Heart right ventricle (tissue), 16 donors: ENCODE measurements at regions of chr11 and their contacts with region 1.

Region 1: DNA sequence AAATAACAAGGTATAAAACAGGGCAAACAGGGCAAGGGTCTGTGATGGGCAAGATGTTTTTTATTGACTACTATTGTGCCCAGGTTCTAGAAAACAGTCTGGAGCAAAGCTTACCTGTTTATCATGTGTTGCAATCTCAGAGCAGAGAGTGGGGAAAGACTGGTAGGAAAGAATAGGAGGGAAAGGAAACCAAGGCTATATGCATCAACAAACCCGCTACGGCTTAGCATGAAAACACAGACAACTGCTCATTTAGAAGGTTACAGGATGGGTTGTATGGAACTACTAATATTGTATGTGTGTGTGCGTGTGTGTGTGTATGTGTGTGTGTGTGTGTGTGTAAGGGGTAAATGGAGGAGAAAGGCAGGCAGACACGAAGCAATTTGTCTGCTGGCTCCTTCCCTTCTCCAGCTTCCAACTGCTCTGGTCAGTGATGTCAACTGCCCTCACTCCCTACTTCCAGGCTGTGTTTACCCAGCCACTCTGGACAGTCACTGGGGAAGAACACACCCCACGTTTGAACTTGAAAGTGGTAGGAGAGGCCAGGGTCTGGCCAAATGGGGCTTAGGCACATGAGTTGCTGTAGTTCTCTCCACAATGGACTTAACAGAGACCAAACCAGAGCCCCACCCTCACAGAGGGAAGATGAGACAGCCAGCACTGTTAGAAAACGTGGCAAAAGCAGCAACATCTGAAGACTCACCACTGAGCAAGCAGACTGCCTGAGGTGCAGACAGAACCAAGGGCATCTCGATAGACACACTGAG is 47.0 kb downstream of the GAB2 start:
- DNase-seq: peak in 1 of 2 donors; percentile 31
- ATAC-seq: peak; percentile 67 to 90 (median 86)
- H3K4me3 ChIP-seq: no peak overlapping the region
- H3K27ac ChIP-seq: peak overlapping the region; percentile 5 to 71 (median 42)
- H3K4me1 ChIP-seq: peaks cover 16 to 53% (median 34%) of the 10 kb centered on the region in 9 donors
- H3K27me3 ChIP-seq: no peaks in the 10 kb centered on the region
- CTCF ChIP-seq: no peak

Region 2: GRCh38 chr11:77806993-77807740 is 563.4 kb before region 1 on chr11:
- intact Hi-C with region 1: no loop called
- DNase-seq: no peak
- ATAC-seq: no peak
- H3K4me3 ChIP-seq: no peak overlapping the region
- H3K27ac ChIP-seq: no peak overlapping the region
- H3K4me1 ChIP-seq: peaks cover 0 to 35% (median 12%) of the 10 kb centered on the region in 9 donors
- H3K27me3 ChIP-seq: no peaks in the 10 kb centered on the region
- CTCF ChIP-seq: no peak

Region 3: DNA sequence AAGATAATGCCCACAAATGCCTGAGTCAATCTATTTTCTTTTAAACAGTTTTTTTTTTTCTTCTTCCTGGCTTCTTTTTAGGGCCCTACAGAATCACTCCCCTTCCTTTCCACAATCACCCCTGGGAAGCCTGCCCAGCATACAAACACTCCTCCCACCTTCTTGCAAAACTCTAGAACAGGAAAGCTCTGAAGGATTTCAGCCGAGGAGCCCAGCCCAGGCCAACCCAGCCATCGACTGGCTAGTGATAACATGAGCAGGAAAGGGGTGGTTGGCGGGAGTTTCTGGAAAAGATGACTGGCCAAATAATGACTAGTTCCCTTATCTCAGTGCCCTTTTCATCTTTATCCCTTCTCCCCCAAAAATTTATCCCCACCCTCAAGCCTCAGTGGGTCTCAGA is 113.6 kb before region 1 on chr11:
- intact Hi-C with region 1: loop called in 1 of 10 experiments (anchors 10 kb)
- DNase-seq: peak; percentile 75 to 84
- ATAC-seq: peak; percentile 89 to 97 (median 93)
- H3K4me3 ChIP-seq: no peak overlapping the region
- H3K27ac ChIP-seq: peak overlapping the region; percentile 22 to 84 (median 58)
- H3K4me1 ChIP-seq: peaks cover 10 to 84% (median 46%) of the 10 kb centered on the region in 9 donors
- H3K27me3 ChIP-seq: no peaks in the 10 kb centered on the region
- CTCF ChIP-seq: no peak